IMR-90 (cell line): ENCODE measurements at regions of chr9 and their contacts with region 1.

Region 1: GRCh38 chr9:21965401-21965951 is 28.7 kb downstream of the CDKN2A start:
- DNase-seq: peak; percentile 77
- ATAC-seq: peak; percentile 93
- H3K4me3 ChIP-seq: peak overlapping the region; percentile 21
- H3K27ac ChIP-seq: no peak overlapping the region
- H3K4me1 ChIP-seq: peaks cover 4% of the 10 kb centered on the region
- H3K27me3 ChIP-seq: peaks cover 36% of the 10 kb centered on the region
- CTCF ChIP-seq: peak; percentile 59
- POLR2A ChIP-seq: no peak
- RAD21 ChIP-seq: peak; percentile 59

Region 2: DNA sequence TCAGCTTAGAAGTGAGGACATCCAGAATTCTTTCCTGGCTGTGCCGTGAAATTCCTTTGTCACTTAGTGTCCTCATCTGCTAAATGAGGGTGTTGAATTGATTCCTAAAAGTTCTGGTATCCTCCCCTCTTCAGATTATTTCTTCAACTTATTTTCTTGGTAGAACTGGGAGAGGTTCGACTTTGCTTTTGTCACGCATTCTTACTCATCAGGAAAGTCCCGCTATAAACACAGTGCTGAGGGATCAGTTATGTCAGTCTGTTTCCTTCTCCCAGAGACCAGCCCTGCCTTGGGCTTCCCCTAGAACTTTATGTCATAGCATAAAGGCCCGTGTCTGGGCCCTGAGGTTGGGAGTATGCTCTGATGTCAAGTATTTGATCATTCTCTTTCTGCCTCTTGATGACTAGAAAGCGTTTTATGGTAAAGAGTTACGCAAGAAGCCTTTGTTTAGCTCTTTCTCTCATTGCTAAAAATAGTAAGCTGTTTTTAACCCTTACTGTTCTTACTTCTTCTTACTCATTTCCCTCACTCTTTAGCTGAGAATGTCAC is 133.4 kb before region 1 on chr9:
- CTCF ChIA-PET with region 1: no interaction called
- POLR2A ChIA-PET with region 1: no interaction called
- dilution Hi-C with region 1: no loop called
- in situ Hi-C with region 1: no loop called
- intact Hi-C with region 1: loop called (anchors 5 kb)
- DNase-seq: peak; percentile 98
- ATAC-seq: peak; percentile 65
- H3K4me3 ChIP-seq: no peak overlapping the region
- H3K27ac ChIP-seq: peak overlapping the region; percentile 35
- H3K4me1 ChIP-seq: peaks cover 23% of the 10 kb centered on the region
- H3K27me3 ChIP-seq: no peaks in the 10 kb centered on the region
- CTCF ChIP-seq: no peak
- POLR2A ChIP-seq: no peak
- RAD21 ChIP-seq: no peak